WTC11 (cell line): ENCODE measurements at regions of chr12 and their contacts with region 1.

Region 1: DNA sequence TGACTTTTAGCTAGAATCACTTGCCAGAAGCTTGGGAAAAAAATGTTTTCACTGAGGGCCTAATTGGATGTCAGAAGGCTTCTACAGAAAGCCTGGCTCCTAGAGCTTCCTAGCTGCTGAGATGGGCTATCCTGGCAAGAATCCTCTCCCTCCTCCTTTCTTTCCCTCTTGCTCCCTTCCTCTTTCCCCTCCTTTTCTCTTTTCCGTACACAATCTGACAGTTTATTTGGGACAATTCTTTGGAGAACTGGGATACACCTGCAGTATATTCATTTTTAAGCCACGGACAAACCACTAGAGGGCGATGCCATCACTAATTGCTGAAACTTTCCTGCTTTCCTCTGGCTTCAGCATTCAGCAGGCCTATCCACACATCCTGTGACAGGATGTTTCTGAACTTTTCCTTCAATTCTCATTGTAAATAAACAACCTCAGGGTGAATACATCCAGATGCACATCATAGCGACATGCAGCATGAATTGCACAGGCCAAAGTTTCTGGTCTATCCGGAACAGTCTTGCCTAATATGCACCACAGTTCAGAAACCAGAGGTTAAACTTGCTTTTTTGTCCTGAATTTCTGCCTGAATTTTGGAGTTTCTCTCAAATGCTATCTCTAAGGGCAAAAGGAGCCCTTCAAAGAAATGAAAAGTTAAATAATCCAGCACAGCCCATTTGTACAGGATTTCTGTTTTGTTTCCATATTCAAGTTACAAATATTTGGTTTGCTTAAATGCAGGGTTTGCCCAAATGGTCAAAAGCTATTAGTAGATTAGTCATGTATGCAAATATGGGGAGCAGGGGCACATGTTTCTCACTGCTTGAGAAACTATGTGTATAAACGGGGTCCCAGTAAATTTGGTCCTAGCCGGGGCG is 142.8 kb downstream of the PAWR start:
- DNase-seq: peak; percentile 56
- ATAC-seq: peak; percentile 43
- H3K4me3 Mint-ChIP-seq: peak overlapping the region; percentile 31
- H3K27ac Mint-ChIP-seq: peak overlapping the region; percentile 99
- H3K4me1 Mint-ChIP-seq: peaks cover 85% of the 10 kb centered on the region
- H3K27me3 Mint-ChIP-seq: no peaks in the 10 kb centered on the region
- CTCF ChIP-seq: peak; percentile 60; the same call in 1 of the 2 replicates

Region 2: GRCh38 chr12:79420146-79420618 is 127.8 kb before region 1 on chr12:
- CTCF ChIA-PET with region 1: interaction called, 13 read pairs
- POLR2A ChIA-PET with region 1: interaction called, 4 read pairs
- DNase-seq: no peak
- ATAC-seq: peak; percentile 88
- H3K4me3 Mint-ChIP-seq: no peak overlapping the region
- H3K27ac Mint-ChIP-seq: peak overlapping the region; percentile 54
- H3K4me1 Mint-ChIP-seq: peaks cover 75% of the 10 kb centered on the region
- H3K27me3 Mint-ChIP-seq: no peaks in the 10 kb centered on the region
- CTCF ChIP-seq: peak; percentile 46

Region 3: GRCh38 chr12:79690638-79691493 is 142.9 kb after region 1 on chr12 and contains the start of gene PAWR:
- CTCF ChIA-PET with region 1: interaction called, 5 read pairs
- POLR2A ChIA-PET with region 1: interaction called, 27 read pairs
- DNase-seq: peak; percentile 90
- ATAC-seq: peak; percentile 88
- H3K4me3 Mint-ChIP-seq: peak within 1 kb of the TSS; percentile 85
- H3K27ac Mint-ChIP-seq: peak within 1 kb of the TSS; percentile 99
- H3K4me1 Mint-ChIP-seq: peaks cover 34% of the 10 kb centered on the region
- H3K27me3 Mint-ChIP-seq: no peaks in the 10 kb centered on the region; the same call in 1 of the 2 replicates
- CTCF ChIP-seq: no peak
- total RNA-seq, gene PAWR: 397 to 512 TPM (median 493 TPM) in 3 replicates